ENCODE measurements at regions of chr19 and their contacts with region 1.

Region 1: DNA sequence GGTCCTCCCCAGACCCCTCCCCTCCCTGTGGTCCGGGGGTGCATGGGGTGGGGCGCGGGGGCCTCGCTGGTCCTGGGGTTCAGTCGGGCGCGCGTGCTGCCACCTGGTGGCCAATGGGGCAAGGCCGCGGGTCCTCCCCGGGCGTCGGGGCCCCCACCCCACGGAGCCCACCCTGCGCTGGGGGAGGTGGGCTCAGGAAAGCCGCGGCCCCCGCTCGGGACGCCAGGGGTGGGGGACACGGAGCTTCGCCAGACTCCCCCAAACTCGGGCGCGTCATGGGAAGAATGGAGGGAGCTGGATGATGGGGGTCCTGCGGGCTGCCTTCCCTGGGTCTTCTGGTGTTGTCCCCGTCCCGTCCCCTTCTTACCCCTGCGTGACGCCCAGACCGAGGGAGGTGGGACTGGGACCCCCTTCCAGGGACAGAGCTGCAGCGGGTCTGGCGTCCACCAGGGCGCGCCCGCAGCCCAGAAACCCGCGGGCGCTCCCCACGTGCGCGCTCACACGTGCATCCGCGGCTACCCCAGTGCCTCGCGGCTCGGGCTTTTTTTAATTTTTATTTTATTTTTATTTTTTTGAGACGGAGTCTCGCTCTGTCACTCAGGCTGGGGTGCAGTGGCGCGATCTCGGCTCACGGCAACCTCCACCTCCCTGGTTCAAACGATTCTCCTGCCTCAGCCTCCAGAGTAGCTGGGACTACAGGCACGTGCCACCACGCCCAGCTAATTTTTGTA is 19.8 kb upstream of the TCF3 start:
- DNase-seq: peak; percentile 75
- ATAC-seq: peak; percentile 38
- H3K4me3 Mint-ChIP-seq: peak overlapping the region; percentile 71
- H3K27ac Mint-ChIP-seq: peak overlapping the region; percentile 53
- H3K4me1 Mint-ChIP-seq: peaks cover 33% of the 10 kb centered on the region
- H3K27me3 Mint-ChIP-seq: peaks cover 24% of the 10 kb centered on the region
- CTCF ChIP-seq: no peak

Region 2: DNA sequence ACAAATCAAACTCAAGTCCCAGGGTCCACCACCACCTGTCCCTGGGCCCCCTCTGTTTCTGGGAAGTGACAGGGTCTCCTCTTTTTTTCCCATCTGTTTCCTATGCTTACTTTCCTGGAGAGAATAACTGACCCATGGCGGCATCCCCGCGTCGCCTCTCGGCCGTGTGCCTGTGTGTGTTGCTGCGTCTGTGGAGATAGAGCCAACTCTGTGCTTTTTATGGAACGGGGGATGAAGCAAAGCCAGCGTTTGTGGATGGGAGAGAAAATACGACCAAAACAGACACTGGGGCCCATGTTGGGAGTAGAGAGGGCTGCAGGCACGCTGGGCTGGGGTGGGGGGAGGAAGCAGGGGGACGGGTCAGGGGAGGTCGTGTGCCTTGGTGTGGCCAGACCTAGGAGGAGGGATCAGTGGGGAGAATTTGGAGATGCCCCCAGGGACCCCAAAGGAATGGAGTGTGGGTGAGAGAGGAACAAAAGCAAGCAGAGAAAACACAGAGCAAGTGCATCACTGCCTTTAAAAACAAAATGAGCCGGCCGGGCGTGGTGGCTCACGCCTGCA is 131.8 kb before region 1 on chr19:
- CTCF ChIA-PET with region 1: interaction called, 17 read pairs
- POLR2A ChIA-PET with region 1: no interaction called
- intact Hi-C with region 1: no loop called
- DNase-seq: no peak
- ATAC-seq: no peak
- H3K4me3 Mint-ChIP-seq: no peak overlapping the region
- H3K27ac Mint-ChIP-seq: no peak overlapping the region
- H3K4me1 Mint-ChIP-seq: no peaks in the 10 kb centered on the region
- H3K27me3 Mint-ChIP-seq: peaks cover 18% of the 10 kb centered on the region
- CTCF ChIP-seq: no peak

Region 3: GRCh38 chr19:1605236-1606137 is 66.7 kb before region 1 on chr19 and contains the start of gene UQCR11:
- CTCF ChIA-PET with region 1: interaction called, 8 read pairs
- POLR2A ChIA-PET with region 1: interaction called, 12 read pairs
- intact Hi-C with region 1: loop called (anchors 1 kb)
- DNase-seq: peak; percentile 87
- ATAC-seq: peak; percentile 88
- H3K4me3 Mint-ChIP-seq: peak within 1 kb of the TSS; percentile 93
- H3K27ac Mint-ChIP-seq: peak within 1 kb of the TSS; percentile 96
- H3K4me1 Mint-ChIP-seq: peaks cover 49% of the 10 kb centered on the region
- H3K27me3 Mint-ChIP-seq: no peaks in the 10 kb centered on the region
- CTCF ChIP-seq: no peak
- total RNA-seq, gene UQCR11: 117 and 141 TPM in 2 replicates

Region 4: GRCh38 chr19:1624458-1624857 is 47.7 kb before region 1 on chr19:
- CTCF ChIA-PET with region 1: interaction called, 12 read pairs
- POLR2A ChIA-PET with region 1: no interaction called
- intact Hi-C with region 1: loop called (anchors 2 kb)
- DNase-seq: peak; percentile 44
- ATAC-seq: peak; percentile 84
- H3K4me3 Mint-ChIP-seq: no peak overlapping the region
- H3K27ac Mint-ChIP-seq: no peak overlapping the region
- H3K4me1 Mint-ChIP-seq: peaks cover 7% of the 10 kb centered on the region
- H3K27me3 Mint-ChIP-seq: no peaks in the 10 kb centered on the region
- CTCF ChIP-seq: no peak

Region 5: GRCh38 chr19:1739960-1740629 is 67.9 kb after region 1 on chr19:
- CTCF ChIA-PET with region 1: no interaction called
- POLR2A ChIA-PET with region 1: no interaction called
- intact Hi-C with region 1: no loop called
- DNase-seq: no peak
- ATAC-seq: no peak
- H3K4me3 Mint-ChIP-seq: no peak overlapping the region
- H3K27ac Mint-ChIP-seq: no peak overlapping the region
- H3K4me1 Mint-ChIP-seq: no peaks in the 10 kb centered on the region
- H3K27me3 Mint-ChIP-seq: peaks cover 21% of the 10 kb centered on the region
- CTCF ChIP-seq: no peak

Region 6: DNA sequence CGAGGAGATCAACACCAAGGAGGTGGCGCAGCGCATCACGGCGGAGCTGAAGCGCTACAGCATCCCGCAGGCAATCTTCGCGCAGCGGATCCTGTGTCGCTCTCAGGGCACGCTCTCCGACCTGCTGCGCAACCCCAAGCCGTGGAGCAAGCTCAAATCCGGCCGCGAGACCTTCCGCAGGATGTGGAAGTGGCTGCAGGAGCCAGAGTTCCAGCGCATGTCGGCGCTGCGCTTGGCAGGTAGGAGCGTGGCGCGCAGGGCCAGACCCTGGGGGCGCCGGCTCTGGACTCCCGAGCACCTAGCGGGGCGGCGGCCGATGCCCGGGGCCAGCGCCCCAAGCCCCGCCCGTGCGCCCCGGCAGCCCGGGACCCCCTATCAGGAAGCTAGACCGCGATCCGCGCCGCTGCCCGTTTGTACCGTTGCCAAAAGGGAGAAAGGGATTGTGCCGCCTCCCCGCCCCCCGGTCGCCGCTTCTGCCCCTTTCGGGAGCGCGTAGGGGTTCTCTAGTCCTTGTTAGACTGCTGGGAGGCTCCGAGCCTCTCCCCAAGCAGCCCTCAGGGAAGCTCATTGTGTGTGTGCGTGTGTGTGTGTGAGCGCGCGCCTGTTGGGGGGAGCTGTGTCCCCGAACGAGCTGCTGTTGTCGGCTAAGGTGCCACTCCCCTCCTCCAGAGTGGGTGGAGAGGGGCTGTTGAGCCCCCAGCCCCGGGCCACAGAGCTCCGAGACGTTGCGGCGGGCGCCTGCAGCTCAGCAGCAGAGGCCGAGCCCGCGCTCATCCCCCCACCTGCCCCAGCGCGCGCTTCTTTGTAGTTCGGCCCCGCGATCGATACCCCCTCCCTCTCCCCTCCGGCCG is 82.6 kb after region 1 on chr19:
- CTCF ChIA-PET with region 1: interaction called, 3 read pairs
- POLR2A ChIA-PET with region 1: no interaction called
- intact Hi-C with region 1: loop called (anchors 5 kb)
- DNase-seq: no peak
- ATAC-seq: no peak
- H3K4me3 Mint-ChIP-seq: no peak overlapping the region
- H3K27ac Mint-ChIP-seq: no peak overlapping the region
- H3K4me1 Mint-ChIP-seq: peaks cover 33% of the 10 kb centered on the region
- H3K27me3 Mint-ChIP-seq: peaks cover 38% of the 10 kb centered on the region
- CTCF ChIP-seq: no peak

Region 7: DNA sequence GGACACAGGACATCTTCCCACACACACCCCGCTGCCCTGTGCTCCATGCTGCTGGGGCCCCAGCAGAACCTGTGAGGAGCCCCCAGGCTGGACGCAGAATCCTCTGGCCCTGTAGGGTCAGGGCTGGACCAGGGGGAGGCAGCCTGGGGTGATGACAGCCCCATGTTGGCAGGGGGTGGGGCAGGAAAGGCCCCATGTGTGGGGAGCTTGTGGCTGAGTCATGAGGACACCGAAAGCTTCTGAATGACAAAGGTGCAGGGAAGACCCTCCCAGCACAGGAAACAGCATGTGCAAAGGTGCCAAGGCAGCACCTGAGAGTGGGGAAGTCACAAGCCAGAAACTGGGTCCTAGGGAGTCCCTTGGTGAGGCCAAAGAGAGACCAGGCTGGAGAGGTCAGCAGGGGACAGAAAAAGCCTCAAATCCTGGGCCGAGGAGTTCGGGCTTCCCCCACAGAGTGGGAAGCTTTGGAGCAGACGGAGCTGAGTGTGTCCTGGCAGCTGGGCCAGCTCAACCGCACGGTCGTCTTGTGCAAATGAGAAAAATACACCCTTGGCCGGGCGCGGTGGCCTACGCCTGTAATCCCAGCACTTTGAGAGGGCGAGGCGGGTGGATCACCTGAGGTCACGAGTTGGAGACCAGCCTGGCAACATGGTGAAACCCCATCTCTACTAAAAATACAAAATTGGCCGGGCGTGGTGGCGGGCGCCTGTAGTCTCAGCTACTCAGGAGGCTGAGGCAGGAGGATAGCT is 122.4 kb after region 1 on chr19:
- CTCF ChIA-PET with region 1: interaction called, 8 read pairs
- POLR2A ChIA-PET with region 1: no interaction called
- intact Hi-C with region 1: loop called (anchors 5 kb)
- DNase-seq: no peak
- ATAC-seq: no peak
- H3K4me3 Mint-ChIP-seq: no peak overlapping the region
- H3K27ac Mint-ChIP-seq: no peak overlapping the region
- H3K4me1 Mint-ChIP-seq: no peaks in the 10 kb centered on the region
- H3K27me3 Mint-ChIP-seq: peaks cover 15% of the 10 kb centered on the region
- CTCF ChIP-seq: no peak

Region 8: DNA sequence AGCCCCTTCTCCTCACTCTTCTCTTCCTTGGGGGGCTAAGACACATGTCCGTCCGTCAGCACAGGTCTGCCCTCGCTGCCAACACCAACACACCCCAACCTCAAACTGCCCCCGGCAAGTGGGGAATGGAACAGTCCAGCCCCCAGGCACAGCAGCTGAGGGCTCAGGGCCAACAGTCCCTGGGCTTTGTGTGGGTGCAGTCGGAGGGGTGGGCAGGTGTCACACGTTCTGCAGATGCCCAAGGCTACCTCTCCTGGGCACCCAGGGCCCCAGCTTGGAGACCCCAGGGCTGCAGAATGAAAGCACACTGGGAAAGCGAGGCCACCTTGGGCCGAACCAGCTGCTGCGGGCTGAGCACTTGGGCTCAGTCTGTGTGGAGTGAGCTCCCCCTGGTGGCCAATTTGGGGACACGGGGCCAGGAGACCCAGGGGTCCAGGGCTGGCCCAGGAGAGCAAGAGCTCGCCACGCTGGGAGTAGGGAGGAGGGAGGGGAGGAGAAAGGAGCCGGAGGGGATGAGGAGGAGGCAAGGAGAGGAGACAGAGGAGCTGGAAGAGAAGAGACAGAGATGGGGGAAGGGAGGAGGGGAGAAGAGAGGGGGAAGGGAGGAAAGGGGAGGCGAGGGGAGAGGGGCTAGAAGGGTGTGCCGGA is 153.8 kb after region 1 on chr19:
- CTCF ChIA-PET with region 1: interaction called, 11 read pairs
- POLR2A ChIA-PET with region 1: interaction called, 3 read pairs
- intact Hi-C with region 1: loop called (anchors 1 kb)
- DNase-seq: peak; percentile 72
- ATAC-seq: peak; percentile 93
- H3K4me3 Mint-ChIP-seq: no peak overlapping the region
- H3K27ac Mint-ChIP-seq: no peak overlapping the region
- H3K4me1 Mint-ChIP-seq: peaks cover 3% of the 10 kb centered on the region
- H3K27me3 Mint-ChIP-seq: no peaks in the 10 kb centered on the region
- CTCF ChIP-seq: no peak